Calu3 (cell line): ENCODE measurements at regions of chr12 and their contacts with region 1.

Region 1: DNA sequence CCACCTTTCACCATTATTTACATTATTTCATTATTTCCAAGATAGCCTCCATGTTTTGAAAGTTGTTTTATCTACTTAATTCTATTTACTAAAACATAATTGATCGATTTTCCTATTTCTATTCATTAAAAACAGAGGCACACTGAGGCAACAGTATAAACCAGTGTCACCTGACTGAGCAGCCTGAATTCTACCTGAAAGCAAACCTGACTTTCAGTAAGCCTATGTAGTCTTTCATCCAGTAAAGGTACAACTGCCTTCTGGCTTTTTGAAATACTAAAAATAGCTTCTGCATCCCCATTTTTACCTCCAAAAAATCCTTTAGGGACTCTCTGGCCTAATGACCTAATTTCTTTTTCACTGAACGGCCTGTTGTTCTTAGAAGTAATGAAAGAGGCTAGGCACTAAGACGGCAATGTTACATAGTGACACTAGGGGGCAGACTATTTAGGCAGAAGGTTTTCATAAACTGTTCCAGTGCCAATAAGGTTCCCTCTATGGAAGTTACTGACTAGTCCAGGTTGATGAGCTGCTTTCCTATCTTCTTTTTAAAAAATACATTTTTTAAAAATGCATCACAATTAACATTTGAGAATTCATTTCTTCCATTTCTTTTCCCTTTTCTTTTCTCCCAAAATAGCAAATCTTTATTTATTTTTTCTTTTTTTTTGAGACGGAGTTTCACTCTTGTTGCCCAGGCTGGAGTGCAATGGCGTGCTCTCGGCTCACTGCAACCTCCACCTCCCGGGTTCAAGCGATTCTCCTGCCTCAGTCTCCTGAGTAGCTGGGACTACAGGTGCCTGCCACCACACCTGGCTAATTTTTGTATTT is 17.5 kb downstream of the ANAPC5 start:
- DNase-seq: peak; percentile 37
- H3K4me3 Mint-ChIP-seq: no peak overlapping the region
- H3K27ac Mint-ChIP-seq: no peak overlapping the region
- H3K4me1 Mint-ChIP-seq: peaks cover 21% of the 10 kb centered on the region
- H3K27me3 Mint-ChIP-seq: no peaks in the 10 kb centered on the region
- CTCF ChIP-seq: peak; percentile 59

Region 2: DNA sequence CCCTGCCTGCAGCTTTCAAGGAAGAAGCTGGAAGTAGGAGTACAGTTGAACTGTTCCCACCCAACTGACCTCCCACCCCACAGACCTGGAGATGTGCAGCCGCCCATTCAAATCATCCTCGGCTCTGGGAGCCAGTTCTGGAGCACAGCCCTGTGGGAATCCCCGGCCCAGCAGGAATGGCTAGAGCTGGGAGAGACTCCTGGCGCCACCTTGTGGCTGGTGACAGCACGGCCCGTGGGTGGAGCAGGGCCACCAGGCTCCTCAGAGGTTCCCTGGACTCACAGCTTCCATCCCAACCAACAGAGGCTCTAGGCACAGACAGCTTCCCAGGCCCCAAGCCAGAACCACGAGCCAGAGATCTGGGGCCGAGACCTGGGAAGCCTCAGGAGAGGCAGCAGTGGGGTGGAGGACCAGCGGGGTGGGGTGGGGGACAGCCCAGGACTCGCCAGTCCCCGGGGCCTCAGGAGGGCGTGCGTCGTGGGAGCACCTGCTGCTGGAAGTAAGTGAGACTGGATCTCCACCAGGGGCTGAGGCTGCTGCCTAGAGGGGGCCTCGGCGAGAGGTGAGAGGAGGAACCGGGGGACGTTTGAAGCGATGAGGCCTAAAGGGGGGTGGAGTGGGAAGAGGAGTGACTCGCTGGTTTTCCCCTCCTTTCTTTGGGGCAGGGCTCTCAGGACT is 108.6 kb after region 1 on chr12:
- CTCF ChIA-PET with region 1: interaction called, 15 read pairs
- intact Hi-C with region 1: loop called (anchors 2 kb)
- DNase-seq: peak; percentile 94
- H3K4me3 Mint-ChIP-seq: no peak overlapping the region
- H3K27ac Mint-ChIP-seq: no peak overlapping the region
- H3K4me1 Mint-ChIP-seq: no peaks in the 10 kb centered on the region
- H3K27me3 Mint-ChIP-seq: no peaks in the 10 kb centered on the region
- CTCF ChIP-seq: peak; percentile 69